ENCODE measurements at regions of chr20 and their contacts with region 1.

Region 1: GRCh38 chr20:51595058-51595532 is 52.6 kb upstream of the NFATC2 start:
- DNase-seq: peak; percentile 86
- ATAC-seq: peak; percentile 92
- H3K4me3 ChIP-seq: no peak overlapping the region
- H3K4me3 Mint-ChIP-seq: peak overlapping the region; percentile 47
- H3K27ac ChIP-seq: no peak overlapping the region
- H3K27ac Mint-ChIP-seq: peak overlapping the region; percentile 60
- H3K4me1 ChIP-seq: peaks cover 17 to 19% of the 10 kb centered on the region in 2 donors
- H3K4me1 Mint-ChIP-seq: peaks cover 19% of the 10 kb centered on the region
- H3K27me3 ChIP-seq: peaks cover 0 to 12% (median 2%) of the 10 kb centered on the region in 4 experiments
- H3K27me3 Mint-ChIP-seq: peaks cover 57% of the 10 kb centered on the region
- CTCF ChIP-seq: peak; percentile 86

Region 2: GRCh38 chr20:50987592-50988210 is 607.4 kb before region 1 on chr20:
- CTCF ChIA-PET with region 1: interaction called, 21 read pairs
- POLR2A ChIA-PET with region 1: interaction called, 4 read pairs
- intact Hi-C with region 1: loop called (anchors 1 kb)
- DNase-seq: peak; percentile 86
- ATAC-seq: peak; percentile 99
- H3K4me3 ChIP-seq: no peak overlapping the region
- H3K4me3 Mint-ChIP-seq: no peak overlapping the region
- H3K27ac ChIP-seq: no peak overlapping the region
- H3K27ac Mint-ChIP-seq: peak overlapping the region; percentile 11
- H3K4me1 ChIP-seq: peaks cover 10 to 11% of the 10 kb centered on the region in 2 donors
- H3K4me1 Mint-ChIP-seq: peaks cover 12% of the 10 kb centered on the region
- H3K27me3 ChIP-seq: peaks cover 0 to 15% (median 4%) of the 10 kb centered on the region in 4 experiments
- H3K27me3 Mint-ChIP-seq: peaks cover 23% of the 10 kb centered on the region
- CTCF ChIP-seq: peak; percentile 87

Region 3: DNA sequence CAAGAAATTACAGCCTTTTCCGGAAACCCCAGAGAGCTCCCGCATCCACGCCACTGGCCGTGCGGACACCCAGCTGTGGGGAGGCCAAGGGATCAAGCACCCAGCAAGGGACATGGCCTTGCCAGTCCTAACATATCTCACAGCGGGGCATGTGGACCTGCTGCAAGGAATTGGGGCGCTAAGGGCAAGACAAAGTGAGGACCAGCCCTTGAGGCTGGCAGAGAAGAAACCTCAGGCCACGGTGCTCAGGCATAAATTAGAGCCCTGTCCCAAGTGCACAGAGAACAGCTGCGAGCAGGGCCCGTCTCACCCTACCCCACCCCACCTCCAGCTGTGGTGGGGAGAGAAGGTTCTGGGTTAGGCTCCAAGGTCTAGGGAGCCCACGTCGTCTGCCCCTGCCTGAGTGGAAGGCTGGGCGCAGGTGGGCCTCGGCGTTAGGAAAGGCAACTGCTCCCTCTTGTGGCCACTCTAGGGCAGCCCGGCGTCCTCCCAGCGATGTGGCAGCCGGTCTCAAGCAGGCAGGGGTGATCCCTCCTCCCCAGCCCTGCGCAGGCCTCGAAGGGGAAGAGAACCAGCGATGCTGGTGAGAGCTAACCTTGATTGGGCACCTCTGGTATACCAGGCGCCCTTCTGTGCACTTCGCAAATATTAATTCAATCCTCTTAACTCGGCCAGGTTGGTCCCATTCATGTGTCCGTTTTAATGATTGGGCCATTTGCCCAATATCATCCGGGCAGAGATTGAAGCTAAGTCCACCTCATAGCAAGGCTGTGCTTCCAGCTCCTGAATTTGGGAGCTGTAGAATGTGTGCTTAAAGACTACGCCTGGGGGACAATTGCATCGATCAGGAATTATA is 288.4 kb before region 1 on chr20:
- CTCF ChIA-PET with region 1: interaction called, 27 read pairs
- POLR2A ChIA-PET with region 1: no interaction called
- intact Hi-C with region 1: loop called (anchors 10 kb)
- DNase-seq: peak; percentile 84
- ATAC-seq: peak; percentile 94
- H3K4me3 ChIP-seq: no peak overlapping the region
- H3K4me3 Mint-ChIP-seq: no peak overlapping the region
- H3K27ac ChIP-seq: no peak overlapping the region
- H3K27ac Mint-ChIP-seq: no peak overlapping the region
- H3K4me1 ChIP-seq: peaks cover 4 to 9% of the 10 kb centered on the region in 2 donors
- H3K4me1 Mint-ChIP-seq: peaks cover 6% of the 10 kb centered on the region
- H3K27me3 ChIP-seq: peaks cover 0 to 7% (median 0%) of the 10 kb centered on the region in 4 experiments
- H3K27me3 Mint-ChIP-seq: peaks cover 26% of the 10 kb centered on the region
- CTCF ChIP-seq: peak; percentile 87

Region 4: DNA sequence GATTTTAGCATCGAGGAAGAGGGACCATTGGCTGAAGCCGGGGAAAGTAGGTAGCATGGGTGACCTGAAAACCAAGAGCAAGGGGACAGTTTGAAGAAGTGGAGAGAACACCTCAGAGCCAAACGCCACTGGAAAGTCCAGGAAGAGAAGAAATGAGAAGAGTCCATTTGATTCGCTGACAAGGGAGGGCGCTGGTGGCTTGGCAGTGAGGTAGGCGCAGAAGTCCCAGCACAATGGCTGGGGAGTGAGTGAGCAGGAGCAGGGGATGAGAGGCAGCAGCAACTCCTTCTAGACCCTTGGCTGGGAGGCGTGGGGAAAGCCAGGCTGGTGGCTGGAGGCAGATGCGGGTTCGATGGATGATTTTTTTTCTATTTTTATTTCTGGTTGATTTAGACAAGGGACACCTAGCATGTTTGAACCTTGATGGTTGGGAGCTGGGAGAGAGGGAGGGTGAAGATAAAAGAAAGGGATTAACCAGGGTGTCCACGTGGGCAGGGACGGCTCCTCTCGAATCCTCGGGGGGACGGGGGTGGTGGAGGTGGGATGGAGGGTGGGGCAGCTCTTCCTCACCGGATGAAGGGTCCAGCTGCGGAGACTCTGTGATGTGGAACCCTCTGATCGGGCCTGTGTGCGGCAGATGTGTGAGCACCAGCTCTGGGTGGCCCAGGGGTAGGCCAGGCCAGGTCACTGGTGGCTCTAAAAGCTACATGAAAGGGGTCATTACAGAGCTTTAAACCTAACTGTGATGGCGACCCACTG is 216.7 kb before region 1 on chr20:
- CTCF ChIA-PET with region 1: interaction called, 117 read pairs
- POLR2A ChIA-PET with region 1: interaction called, 6 read pairs
- intact Hi-C with region 1: no loop called
- DNase-seq: no peak
- ATAC-seq: no peak
- H3K4me3 ChIP-seq: no peak overlapping the region
- H3K4me3 Mint-ChIP-seq: no peak overlapping the region
- H3K27ac ChIP-seq: no peak overlapping the region
- H3K27ac Mint-ChIP-seq: no peak overlapping the region
- H3K4me1 ChIP-seq: peaks cover 15 to 20% of the 10 kb centered on the region in 2 donors
- H3K4me1 Mint-ChIP-seq: peaks cover 23% of the 10 kb centered on the region
- H3K27me3 ChIP-seq: no peaks in the 10 kb centered on the region
- H3K27me3 Mint-ChIP-seq: no peaks in the 10 kb centered on the region
- CTCF ChIP-seq: no peak

Region 5: GRCh38 chr20:51500311-51500710 is 94.8 kb before region 1 on chr20:
- CTCF ChIA-PET with region 1: interaction called, 10 read pairs
- POLR2A ChIA-PET with region 1: no interaction called
- intact Hi-C with region 1: loop called (anchors 10 kb)
- DNase-seq: peak; percentile 63
- ATAC-seq: peak; percentile 76
- H3K4me3 ChIP-seq: no peak overlapping the region
- H3K4me3 Mint-ChIP-seq: no peak overlapping the region
- H3K27ac ChIP-seq: peak overlapping the region; percentile 11 to 25
- H3K27ac Mint-ChIP-seq: peak overlapping the region; percentile 29
- H3K4me1 ChIP-seq: peaks cover 71 to 89% of the 10 kb centered on the region in 2 donors
- H3K4me1 Mint-ChIP-seq: peaks cover 89% of the 10 kb centered on the region
- H3K27me3 ChIP-seq: no peaks in the 10 kb centered on the region
- H3K27me3 Mint-ChIP-seq: no peaks in the 10 kb centered on the region
- CTCF ChIP-seq: no peak

Region 6: GRCh38 chr20:51541189-51542032 is 53.7 kb before region 1 on chr20:
- CTCF ChIA-PET with region 1: interaction called, 23 read pairs
- POLR2A ChIA-PET with region 1: no interaction called
- intact Hi-C with region 1: loop called (anchors 2 kb)
- DNase-seq: peak; percentile 86
- ATAC-seq: peak; percentile 50
- H3K4me3 ChIP-seq: peak overlapping the region; percentile 61 to 89 (median 74)
- H3K4me3 Mint-ChIP-seq: peak overlapping the region; percentile 97
- H3K27ac ChIP-seq: peak overlapping the region; percentile 88 to 96
- H3K27ac Mint-ChIP-seq: peak overlapping the region; percentile 96
- H3K4me1 ChIP-seq: peaks cover 30 to 50% of the 10 kb centered on the region in 2 donors
- H3K4me1 Mint-ChIP-seq: peaks cover 54% of the 10 kb centered on the region
- H3K27me3 ChIP-seq: peaks cover 0 to 4% (median 0%) of the 10 kb centered on the region in 4 experiments
- H3K27me3 Mint-ChIP-seq: no peaks in the 10 kb centered on the region
- CTCF ChIP-seq: no peak

Measured in B cell (primary cell).